ENCODE measurements at regions of chr9 and their contacts with region 1.

Region 1: GRCh38 chr9:2087500-2088313 is 72.6 kb downstream of the SMARCA2 start:
- DNase-seq: no peak
- H3K4me3 ChIP-seq: no peak overlapping the region
- H3K27ac ChIP-seq: no peak overlapping the region
- H3K4me1 ChIP-seq: no peaks in the 10 kb centered on the region
- H3K27me3 ChIP-seq: no peaks in the 10 kb centered on the region
- CTCF ChIP-seq: peak; percentile 25 to 64 (median 32)
- EP300 ChIP-seq: no peak
- POLR2A ChIP-seq: no peak

Region 2: GRCh38 chr9:1939926-1940368 is 147.8 kb before region 1 on chr9:
- intact Hi-C with region 1: loop called (anchors 5 kb)
- DNase-seq: no peak
- H3K4me3 ChIP-seq: no peak overlapping the region
- H3K27ac ChIP-seq: no peak overlapping the region
- H3K4me1 ChIP-seq: no peaks in the 10 kb centered on the region
- H3K27me3 ChIP-seq: no peaks in the 10 kb centered on the region
- CTCF ChIP-seq: peak in 2 of 4 experiments; percentile 17 to 24
- EP300 ChIP-seq: no peak
- POLR2A ChIP-seq: no peak

Region 3: GRCh38 chr9:2260354-2261306 is 172.9 kb after region 1 on chr9:
- intact Hi-C with region 1: no loop called
- DNase-seq: no peak
- H3K4me3 ChIP-seq: no peak overlapping the region
- H3K27ac ChIP-seq: no peak overlapping the region
- H3K4me1 ChIP-seq: no peaks in the 10 kb centered on the region
- H3K27me3 ChIP-seq: no peaks in the 10 kb centered on the region
- CTCF ChIP-seq: no peak
- EP300 ChIP-seq: no peak
- POLR2A ChIP-seq: no peak

Region 4: DNA sequence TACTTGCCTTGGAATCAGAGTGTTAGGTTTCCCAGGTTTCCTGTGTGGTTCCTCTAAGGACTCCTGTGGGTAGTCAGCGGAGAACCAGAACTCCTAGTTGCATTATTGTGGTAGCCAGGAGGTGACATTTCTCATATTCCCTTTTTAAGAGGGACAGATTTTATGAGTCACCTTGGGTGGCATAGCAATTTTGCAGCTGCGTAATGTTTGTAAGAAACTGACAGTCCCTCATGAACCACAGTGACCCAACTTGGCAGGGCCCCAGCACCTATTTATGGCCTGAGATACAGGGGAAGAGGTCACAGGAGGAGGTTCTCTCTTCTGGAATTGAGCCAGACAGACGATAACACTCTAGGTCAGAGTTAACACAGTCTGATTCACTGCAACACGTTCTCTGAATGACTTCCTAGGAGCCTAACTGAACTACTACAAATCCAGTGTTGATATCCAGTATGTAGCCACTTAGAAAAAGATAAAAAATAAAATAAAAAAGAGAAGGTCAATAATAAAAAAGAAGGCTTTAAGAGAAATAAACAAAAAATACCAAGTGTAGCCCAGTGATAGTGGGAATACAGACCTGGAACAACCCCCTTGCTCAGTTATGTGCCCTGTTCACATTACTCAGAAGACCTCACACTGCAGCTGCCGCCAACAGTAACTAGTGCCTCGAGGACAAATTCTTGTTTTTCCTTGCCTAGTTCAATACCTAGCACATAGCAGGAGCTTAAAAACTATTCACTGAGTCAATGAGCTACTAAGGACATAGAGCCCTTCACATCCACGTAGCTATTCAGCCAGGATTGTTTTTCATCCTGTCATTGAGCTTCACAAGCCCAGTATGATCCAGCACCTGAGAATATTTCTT is 483.1 kb after region 1 on chr9:
- intact Hi-C with region 1: no loop called
- DNase-seq: peak; percentile 80
- H3K4me3 ChIP-seq: no peak overlapping the region
- H3K27ac ChIP-seq: peak overlapping the region in 2 of 4 donors; percentile 10 to 45
- H3K4me1 ChIP-seq: peaks cover 0 to 12% (median 11%) of the 10 kb centered on the region in 4 donors
- H3K27me3 ChIP-seq: no peaks in the 10 kb centered on the region
- CTCF ChIP-seq: no peak
- EP300 ChIP-seq: no peak
- POLR2A ChIP-seq: no peak